Activated CD4-positive, alpha-beta T cell treated with anti-CD3 and anti-CD28 coated beads for 36 hours (primary cell): ENCODE measurements at regions of chr5 and their contacts with region 1.

Region 1: DNA sequence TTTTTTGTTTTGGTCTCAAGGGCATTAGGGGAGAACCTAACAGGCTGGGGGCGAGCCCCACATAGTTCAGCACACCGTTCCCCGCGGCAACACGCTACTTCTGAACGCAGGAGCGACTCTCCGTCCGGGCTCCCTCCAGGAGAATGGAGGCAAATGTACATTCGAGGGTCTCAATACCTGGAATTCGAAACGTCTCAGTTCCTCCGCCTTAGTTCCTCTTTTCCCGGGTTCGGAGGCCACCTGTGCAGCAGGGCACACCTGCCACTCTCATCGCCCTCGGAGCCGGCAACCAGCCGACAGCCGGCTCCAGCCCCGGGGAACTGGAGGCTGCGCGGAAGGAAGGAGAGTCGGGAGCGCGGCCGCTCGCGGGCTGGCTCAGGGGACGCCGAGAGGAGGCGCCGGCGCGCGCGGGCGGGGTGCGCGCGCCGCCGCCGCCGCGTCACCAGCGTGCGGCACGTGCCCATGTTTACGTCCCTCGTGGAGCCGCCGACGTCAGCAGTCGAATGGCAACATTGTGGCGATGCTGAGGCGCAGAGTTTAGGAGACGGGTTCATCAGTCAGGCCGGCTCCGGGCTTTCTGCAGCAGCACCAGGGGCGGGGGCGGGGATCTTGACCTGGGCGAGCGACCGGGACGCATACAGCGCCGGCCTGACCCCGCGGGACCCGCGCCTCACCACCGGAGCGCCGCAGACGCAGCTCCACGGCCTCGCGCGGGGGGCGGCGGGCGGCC is at the start of gene JMY:
- DNase-seq: peak; percentile 93
- ATAC-seq: peak; percentile 78
- H3K4me3 Mint-ChIP-seq: peak within 1 kb of the TSS; percentile 97
- H3K27ac Mint-ChIP-seq: peak within 1 kb of the TSS; percentile 99
- H3K4me1 Mint-ChIP-seq: peaks cover 25% of the 10 kb centered on the region
- H3K27me3 Mint-ChIP-seq: no peaks in the 10 kb centered on the region
- total RNA-seq, gene JMY: 7.3 to 7.4 TPM

Region 2: GRCh38 chr5:78359831-78360673 is 875.7 kb before region 1 on chr5 and contains the start of gene SCAMP1:
- CTCF ChIA-PET with region 1: interaction called, 3 read pairs
- POLR2A ChIA-PET with region 1: no interaction called
- intact Hi-C with region 1: loop called in 1 of 2 experiments (anchors 5 kb)
- DNase-seq: peak; percentile 95
- ATAC-seq: peak; percentile 94
- H3K4me3 Mint-ChIP-seq: peak within 1 kb of the TSS; percentile 94
- H3K27ac Mint-ChIP-seq: peak within 1 kb of the TSS; percentile 97
- H3K4me1 Mint-ChIP-seq: peaks cover 35% of the 10 kb centered on the region
- H3K27me3 Mint-ChIP-seq: no peaks in the 10 kb centered on the region
- total RNA-seq, gene SCAMP1: 15.5 to 24.1 TPM

Region 3: GRCh38 chr5:78858364-78858763 is 377.4 kb before region 1 on chr5:
- CTCF ChIA-PET with region 1: no interaction called
- POLR2A ChIA-PET with region 1: no interaction called
- intact Hi-C with region 1: no loop called
- DNase-seq: no peak
- ATAC-seq: no peak
- H3K4me3 Mint-ChIP-seq: no peak overlapping the region
- H3K27ac Mint-ChIP-seq: no peak overlapping the region
- H3K4me1 Mint-ChIP-seq: no peaks in the 10 kb centered on the region
- H3K27me3 Mint-ChIP-seq: no peaks in the 10 kb centered on the region

Region 4: GRCh38 chr5:79269733-79270166 is 34.0 kb after region 1 on chr5:
- CTCF ChIA-PET with region 1: no interaction called
- POLR2A ChIA-PET with region 1: no interaction called
- intact Hi-C with region 1: no loop called
- DNase-seq: peak; percentile 15
- ATAC-seq: no peak
- H3K4me3 Mint-ChIP-seq: no peak overlapping the region
- H3K27ac Mint-ChIP-seq: no peak overlapping the region
- H3K4me1 Mint-ChIP-seq: peaks cover 27% of the 10 kb centered on the region
- H3K27me3 Mint-ChIP-seq: no peaks in the 10 kb centered on the region

Region 5: GRCh38 chr5:79287907-79288306 is 52.1 kb after region 1 on chr5:
- CTCF ChIA-PET with region 1: no interaction called
- POLR2A ChIA-PET with region 1: no interaction called
- intact Hi-C with region 1: no loop called
- DNase-seq: no peak
- ATAC-seq: no peak
- H3K4me3 Mint-ChIP-seq: no peak overlapping the region
- H3K27ac Mint-ChIP-seq: no peak overlapping the region
- H3K4me1 Mint-ChIP-seq: peaks cover 16% of the 10 kb centered on the region
- H3K27me3 Mint-ChIP-seq: no peaks in the 10 kb centered on the region

Region 6: DNA sequence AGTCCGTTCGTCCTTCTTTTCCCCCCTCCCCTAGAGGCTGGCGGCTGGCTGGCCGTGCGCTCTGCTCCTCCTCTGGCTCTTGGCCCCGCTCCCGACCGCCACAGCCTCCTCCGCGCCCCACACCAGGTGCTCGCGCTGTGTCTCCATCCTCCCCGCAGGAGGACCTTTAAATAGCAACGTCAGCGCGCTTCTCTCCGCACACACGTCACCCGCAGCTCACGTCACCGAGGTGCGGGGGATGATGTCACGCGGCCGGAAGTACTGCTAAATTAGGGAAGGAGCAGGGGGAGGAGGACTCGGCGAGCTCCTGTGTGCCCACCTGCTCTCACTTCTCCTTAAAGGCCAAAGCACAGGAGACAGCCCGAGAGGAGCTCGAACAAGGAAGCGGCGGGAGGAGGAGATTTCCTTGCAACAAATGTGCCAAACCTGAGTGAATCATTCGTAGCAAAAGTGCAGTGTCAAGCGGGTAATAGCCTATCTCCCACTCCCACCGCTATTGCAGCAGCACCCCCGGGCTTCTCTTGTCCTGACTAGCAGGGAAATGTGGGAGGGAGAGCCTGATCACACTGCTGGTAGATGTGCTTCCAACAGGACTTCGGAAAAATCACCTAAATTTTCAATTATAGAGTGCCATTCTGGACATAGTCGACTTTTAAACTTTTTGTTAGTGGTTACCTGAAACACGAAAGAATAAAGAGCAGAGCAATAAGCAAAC is 278.7 kb after region 1 on chr5:
- CTCF ChIA-PET with region 1: no interaction called
- POLR2A ChIA-PET with region 1: no interaction called
- intact Hi-C with region 1: loop called (anchors 1 to 2 kb)
- DNase-seq: peak; percentile 94
- ATAC-seq: peak; percentile 82
- H3K4me3 Mint-ChIP-seq: peak overlapping the region; percentile 93
- H3K27ac Mint-ChIP-seq: peak overlapping the region; percentile 97
- H3K4me1 Mint-ChIP-seq: peaks cover 35% of the 10 kb centered on the region
- H3K27me3 Mint-ChIP-seq: peaks cover 15% of the 10 kb centered on the region

Region 7: GRCh38 chr5:79612667-79613198 is 376.9 kb after region 1 on chr5:
- CTCF ChIA-PET with region 1: no interaction called
- POLR2A ChIA-PET with region 1: no interaction called
- intact Hi-C with region 1: loop called (anchors 1 to 5 kb)
- DNase-seq: no peak
- ATAC-seq: no peak
- H3K4me3 Mint-ChIP-seq: peak overlapping the region; percentile 96
- H3K27ac Mint-ChIP-seq: peak overlapping the region; percentile 97
- H3K4me1 Mint-ChIP-seq: peaks cover 35% of the 10 kb centered on the region
- H3K27me3 Mint-ChIP-seq: no peaks in the 10 kb centered on the region